RWPE1 (cell line): ENCODE measurements at regions of chr1 and their contacts with region 1.

Region 1: DNA sequence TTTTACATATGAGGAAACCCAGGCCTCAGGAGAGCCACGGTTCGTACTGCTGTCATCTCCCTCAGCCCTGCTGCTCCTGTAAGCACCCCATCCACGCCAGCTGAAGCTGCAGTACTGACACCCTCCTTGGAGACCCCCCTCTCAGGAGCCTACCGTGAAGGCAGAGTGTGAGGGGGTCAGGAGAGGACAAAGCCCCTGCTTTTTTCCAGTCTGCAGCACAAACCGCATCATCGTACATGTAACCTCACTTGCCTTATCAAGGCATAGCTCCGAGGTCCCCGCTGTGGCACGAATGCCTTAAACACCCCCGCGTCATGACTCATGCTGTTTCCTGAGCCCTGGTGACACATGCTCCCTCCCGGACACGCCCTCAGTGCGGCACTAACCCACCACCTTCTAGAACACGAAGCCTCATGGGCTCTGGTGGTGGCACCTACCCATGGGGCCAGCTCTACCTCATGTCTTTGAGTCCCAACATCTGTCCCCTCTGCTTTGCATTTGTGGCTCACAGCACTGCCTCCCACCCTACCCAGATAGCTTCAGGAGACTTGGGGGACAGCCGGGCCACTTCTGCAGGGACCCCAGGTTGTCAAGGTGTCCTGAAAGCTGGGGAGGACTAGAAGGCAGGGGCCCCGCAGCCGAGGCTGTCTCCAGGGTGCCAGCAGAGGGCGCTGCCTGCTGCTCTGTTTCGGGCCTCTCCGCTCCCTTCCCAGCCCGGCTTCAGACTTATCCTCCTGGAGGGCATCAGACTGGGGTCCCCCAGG is 4.9 kb downstream of the SH3BGRL3 start:
- DNase-seq: peak; percentile 90
- H3K27ac ChIP-seq: peak overlapping the region; percentile 99
- CTCF ChIP-seq: peak; percentile 62

Region 2: GRCh38 chr1:26296340-26297056 is 11.7 kb after region 1 on chr1:
- CTCF ChIA-PET with region 1: interaction called, 10 read pairs
- POLR2A ChIA-PET with region 1: no interaction called
- DNase-seq: no peak
- H3K27ac ChIP-seq: peak overlapping the region; percentile 18; the same call in 1 of the 2 replicates
- CTCF ChIP-seq: no peak

Region 3: DNA sequence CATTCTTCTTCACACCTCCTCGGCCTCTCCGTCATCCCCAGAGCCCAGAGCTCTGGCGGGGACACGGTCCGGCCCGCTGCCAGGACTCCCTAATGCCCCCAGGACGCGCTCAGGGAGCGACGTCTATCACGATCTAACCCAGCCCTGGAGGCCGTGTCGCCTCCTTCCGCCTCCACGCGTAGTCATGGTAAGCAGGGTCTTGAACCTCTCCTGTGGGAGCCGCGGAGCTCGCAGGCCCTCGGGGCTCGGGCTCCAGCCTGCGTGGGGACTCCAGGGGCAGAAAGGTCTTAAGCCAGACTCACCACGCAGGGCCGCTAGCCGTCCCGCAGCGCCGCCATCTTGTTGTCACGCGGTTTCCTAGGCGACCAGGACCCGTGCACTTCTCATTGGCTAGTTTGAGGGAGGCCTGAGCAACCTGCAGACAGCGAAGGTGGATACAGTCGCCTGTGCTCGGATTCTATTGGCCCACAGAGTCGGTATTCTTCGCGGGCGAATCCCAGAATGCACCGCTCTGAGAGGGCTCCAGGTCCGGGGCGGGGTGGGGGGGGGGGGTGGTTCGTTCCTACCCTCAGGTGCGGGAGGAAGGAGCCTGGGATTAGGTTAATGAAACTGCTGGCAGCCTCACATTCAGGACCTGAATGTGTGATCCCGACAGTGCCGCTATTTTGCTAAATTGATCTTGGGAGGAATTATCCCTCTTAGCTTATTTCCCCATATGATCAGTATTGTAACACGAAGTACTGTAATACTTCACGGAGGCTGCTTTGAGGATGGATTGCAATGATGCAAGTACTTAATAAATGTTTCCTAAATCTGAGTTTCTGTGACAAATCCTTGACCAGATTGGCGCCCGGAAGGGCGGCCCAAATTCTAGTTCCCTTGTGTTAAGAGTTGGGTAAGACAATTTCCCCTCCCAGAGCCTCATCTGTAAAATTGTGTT is 21.8 kb after region 1 on chr1 and contains the start of gene UBXN11:
- CTCF ChIA-PET with region 1: interaction called, 11 read pairs
- POLR2A ChIA-PET with region 1: no interaction called
- DNase-seq: peak; percentile 99
- H3K27ac ChIP-seq: peak within 1 kb of the TSS; percentile 70
- CTCF ChIP-seq: no peak